Calu3 (cell line): ENCODE measurements at regions of chr4 and their contacts with region 1.

Region 1: GRCh38 chr4:17468371-17469221 is 43.3 kb downstream of the QDPR start:
- DNase-seq: peak; percentile 4
- H3K4me3 Mint-ChIP-seq: no peak overlapping the region
- H3K27ac Mint-ChIP-seq: no peak overlapping the region
- H3K4me1 Mint-ChIP-seq: no peaks in the 10 kb centered on the region
- H3K27me3 Mint-ChIP-seq: no peaks in the 10 kb centered on the region
- CTCF ChIP-seq: no peak

Region 2: GRCh38 chr4:17347445-17347844 is 121.2 kb before region 1 on chr4:
- CTCF ChIA-PET with region 1: interaction called, 4 read pairs
- intact Hi-C with region 1: loop called (anchors 5 kb)
- DNase-seq: peak; percentile 13
- H3K4me3 Mint-ChIP-seq: no peak overlapping the region
- H3K27ac Mint-ChIP-seq: no peak overlapping the region
- H3K4me1 Mint-ChIP-seq: no peaks in the 10 kb centered on the region
- H3K27me3 Mint-ChIP-seq: no peaks in the 10 kb centered on the region
- CTCF ChIP-seq: no peak